GM10248 (cell line): ENCODE measurements at regions of chr5 and their contacts with region 1.

Region 1: DNA sequence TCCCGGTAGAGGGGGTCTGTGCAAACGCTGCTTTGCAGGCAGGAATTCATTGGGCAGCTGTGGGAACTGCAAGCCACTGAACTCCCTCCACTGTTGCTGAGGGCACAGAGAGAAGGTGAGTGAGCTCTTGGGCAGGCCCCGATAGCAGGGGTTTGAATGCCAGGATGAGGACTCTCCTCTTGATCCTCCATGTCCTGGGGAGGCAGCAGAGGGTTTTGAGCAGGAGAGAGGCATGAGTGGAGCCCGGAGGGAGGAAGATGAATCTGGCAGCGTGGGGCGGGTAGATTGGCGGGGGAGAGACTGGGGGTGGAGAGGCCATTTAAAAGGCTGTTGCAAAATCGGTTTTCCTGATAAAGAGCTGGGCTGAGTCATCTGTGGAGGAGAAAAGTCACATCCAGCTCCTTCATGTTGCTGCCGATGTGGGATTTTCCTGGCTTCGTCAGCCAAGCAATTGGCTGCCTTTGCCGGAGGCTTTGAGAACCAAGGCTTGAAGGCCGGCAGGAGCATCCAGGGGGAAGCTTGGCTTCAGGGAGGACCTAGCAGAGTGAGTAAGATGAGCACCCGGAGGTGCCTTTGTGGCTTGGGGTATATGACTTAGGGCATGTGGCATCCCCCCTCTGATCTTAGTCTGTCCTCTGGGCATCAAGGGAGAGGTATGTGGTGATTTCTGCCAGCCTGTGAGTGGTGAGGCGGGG is at the start of gene SYNPO:
- DNase-seq: no peak
- CTCF ChIP-seq: no peak

Region 2: DNA sequence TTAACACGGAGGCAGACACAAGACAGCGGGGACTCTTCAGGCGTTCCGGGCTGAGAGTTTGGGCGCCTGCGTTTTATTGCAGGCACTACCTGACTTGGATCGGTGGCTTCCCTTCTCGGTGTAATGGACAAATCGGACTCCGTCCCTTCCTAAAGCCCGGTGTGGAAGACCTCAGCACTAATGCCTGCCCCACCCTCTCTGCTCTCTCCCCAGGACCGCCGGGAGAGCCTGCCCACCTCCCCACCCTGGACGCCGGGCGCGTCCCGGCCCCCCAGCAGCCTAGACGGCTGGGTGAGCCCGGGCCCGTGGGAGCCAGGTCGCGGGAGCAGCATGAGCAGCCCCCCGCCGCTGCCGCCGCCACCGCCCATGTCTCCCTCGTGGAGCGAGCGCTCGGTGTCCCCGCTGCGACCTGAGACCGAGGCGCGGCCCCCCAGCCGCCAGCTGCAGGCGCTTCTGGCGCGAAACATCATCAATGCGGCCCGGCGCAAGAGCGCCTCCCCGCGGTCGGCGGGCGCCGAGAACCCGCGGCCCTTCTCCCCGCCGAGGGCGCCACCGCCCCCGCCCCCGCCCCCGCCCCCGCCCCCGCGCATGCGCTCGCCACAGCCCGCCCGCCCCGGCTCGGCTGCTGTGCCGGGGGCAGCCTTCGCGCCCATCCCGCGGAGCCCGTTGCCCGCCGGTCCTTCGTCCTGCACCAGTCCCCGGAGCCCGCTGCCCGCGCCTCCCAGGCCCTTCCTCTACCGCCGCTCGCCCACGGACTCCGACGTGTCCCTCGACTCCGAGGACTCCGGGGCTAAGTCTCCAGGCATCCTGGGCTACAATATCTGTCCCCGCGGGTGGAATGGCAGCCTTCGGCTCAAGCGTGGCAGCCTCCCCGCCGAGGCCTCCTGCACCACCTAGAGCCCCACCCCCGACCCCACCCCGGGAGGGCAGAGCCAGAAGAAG is 16.0 kb after region 1 on chr5:
- CTCF ChIA-PET with region 1: interaction called, 12 read pairs
- POLR2A ChIA-PET with region 1: no interaction called
- DNase-seq: peak; percentile 92
- CTCF ChIP-seq: peak; percentile 86